Heart right ventricle (tissue), 16 donors: ENCODE measurements at regions of chr10 and their contacts with region 1.

Region 1: GRCh38 chr10:123559066-123559822 is 106.9 kb upstream of the GPR26 start:
- DNase-seq: peak; percentile 54 to 70
- ATAC-seq: peak; percentile 72 to 94 (median 84)
- H3K4me3 ChIP-seq: no peak overlapping the region
- H3K27ac ChIP-seq: no peak overlapping the region
- H3K4me1 ChIP-seq: no peaks in the 10 kb centered on the region
- H3K27me3 ChIP-seq: peaks cover 6 to 58% (median 25%) of the 10 kb centered on the region in 7 donors
- CTCF ChIP-seq: peak; percentile 87 to 99 (median 97)

Region 2: GRCh38 chr10:122298598-122299301 is 1260.5 kb before region 1 on chr10:
- intact Hi-C with region 1: loop called in 1 of 10 experiments (anchors 10 kb)
- DNase-seq: peak; percentile 70 to 72
- ATAC-seq: peak; percentile 77 to 92 (median 89)
- H3K4me3 ChIP-seq: peak overlapping the region in 4 of 10 donors; percentile 2 to 25 (median 14)
- H3K27ac ChIP-seq: no peak overlapping the region
- H3K4me1 ChIP-seq: peaks cover 0 to 14% (median 6%) of the 10 kb centered on the region in 9 donors
- H3K27me3 ChIP-seq: no peaks in the 10 kb centered on the region
- CTCF ChIP-seq: peak; percentile 84 to 96 (median 92)

Region 3: DNA sequence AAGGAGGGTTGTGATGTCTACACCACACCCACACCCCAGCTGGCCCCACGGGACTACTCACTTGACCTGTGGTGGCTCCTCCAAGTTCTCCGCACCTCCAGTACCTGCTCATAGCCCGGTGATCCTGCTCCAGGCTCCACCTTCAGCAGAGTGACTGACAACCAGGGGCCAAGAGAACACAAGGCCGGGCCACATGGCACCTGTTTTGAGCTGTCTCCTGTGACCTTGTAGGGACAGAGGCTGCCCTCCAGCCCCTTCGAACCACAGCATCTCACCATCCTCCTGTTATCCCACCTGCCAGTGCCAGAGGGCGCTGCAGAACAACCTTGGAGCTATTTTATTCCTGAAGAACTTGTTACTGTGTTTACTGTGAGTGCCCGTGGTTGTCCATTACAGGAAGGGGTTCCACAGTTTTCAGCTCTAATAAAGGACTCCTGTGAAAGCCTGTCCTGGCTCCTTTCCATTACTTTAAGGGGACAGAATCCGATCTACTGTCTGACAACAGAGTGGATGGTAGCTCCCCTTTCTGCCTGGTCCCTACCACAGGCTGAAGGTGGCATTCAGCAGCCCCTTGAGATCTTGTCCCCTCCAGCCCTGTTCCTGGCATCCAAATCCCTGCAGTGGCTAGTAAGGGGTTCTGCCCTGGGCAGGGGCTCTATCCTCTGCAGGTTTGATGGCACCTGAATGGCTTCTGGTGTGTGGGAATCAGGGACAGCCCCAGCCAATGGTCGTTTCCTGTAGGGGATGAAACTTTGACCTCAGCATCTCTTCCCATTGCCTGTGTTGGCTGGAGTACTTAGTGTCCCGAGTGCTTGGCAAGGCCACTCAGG is 910.4 kb before region 1 on chr10:
- intact Hi-C with region 1: loop called in 2 of 10 experiments (anchors 10 kb)
- DNase-seq: peak; percentile 41 to 54
- ATAC-seq: peak; percentile 64 to 74 (median 70)
- H3K4me3 ChIP-seq: no peak overlapping the region
- H3K27ac ChIP-seq: no peak overlapping the region
- H3K4me1 ChIP-seq: peaks cover 0 to 4% (median 0%) of the 10 kb centered on the region in 9 donors
- H3K27me3 ChIP-seq: peaks cover 0 to 7% (median 0%) of the 10 kb centered on the region in 7 donors
- CTCF ChIP-seq: peak; percentile 61 to 86 (median 82)

Region 4: DNA sequence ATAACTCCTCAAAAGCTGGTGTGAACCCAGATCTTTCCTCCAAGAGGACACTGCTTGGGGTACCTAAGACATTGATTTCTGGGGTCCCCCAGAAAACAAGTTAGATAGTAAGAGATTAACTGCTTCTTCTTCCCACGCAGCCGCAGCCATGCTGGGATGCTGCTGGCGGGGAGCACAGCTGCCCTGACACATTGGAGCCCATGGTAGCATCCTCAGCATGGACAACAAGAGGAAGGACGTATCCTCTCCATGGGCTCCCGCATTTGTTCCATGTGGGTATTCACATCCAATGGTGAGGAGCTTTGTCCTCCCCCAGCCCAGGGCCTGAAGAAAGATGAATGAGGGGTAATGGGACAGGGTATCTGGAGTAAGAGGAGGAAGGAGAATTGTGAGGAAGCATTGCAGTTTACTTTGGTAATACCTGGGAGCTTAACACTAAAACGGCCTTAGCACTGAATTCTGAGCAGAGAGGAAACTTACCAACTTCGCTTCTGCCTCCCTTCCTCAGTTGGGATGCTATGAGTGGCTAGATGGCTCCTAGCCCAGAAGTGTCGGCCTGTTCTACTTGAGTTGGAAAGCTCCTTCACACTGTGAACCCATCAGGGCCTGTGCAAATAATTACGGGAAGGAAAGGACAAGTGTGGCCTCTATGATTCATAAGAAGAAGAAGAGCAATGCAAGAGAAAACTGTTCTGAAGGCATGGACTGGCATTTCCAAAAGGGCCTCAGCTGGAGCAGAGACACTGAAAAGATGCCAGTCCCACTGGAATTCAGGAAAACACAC is 903.5 kb before region 1 on chr10:
- intact Hi-C with region 1: loop called in 1 of 10 experiments (anchors 10 kb)
- DNase-seq: no peak
- ATAC-seq: peak in 2 of 8 donors; percentile 35 to 57
- H3K4me3 ChIP-seq: no peak overlapping the region
- H3K27ac ChIP-seq: no peak overlapping the region
- H3K4me1 ChIP-seq: no peaks in the 10 kb centered on the region
- H3K27me3 ChIP-seq: peaks cover 0 to 9% (median 0%) of the 10 kb centered on the region in 7 donors
- CTCF ChIP-seq: no peak

Region 5: GRCh38 chr10:123043409-123043925 is 515.8 kb before region 1 on chr10:
- intact Hi-C with region 1: loop called (anchors 1 to 10 kb)
- DNase-seq: peak in 1 of 2 donors; percentile 7
- ATAC-seq: peak in 4 of 8 donors; percentile 34 to 63 (median 50)
- H3K4me3 ChIP-seq: no peak overlapping the region
- H3K27ac ChIP-seq: no peak overlapping the region
- H3K4me1 ChIP-seq: no peaks in the 10 kb centered on the region
- H3K27me3 ChIP-seq: no peaks in the 10 kb centered on the region
- CTCF ChIP-seq: peak; percentile 23 to 70 (median 58)

Region 6: DNA sequence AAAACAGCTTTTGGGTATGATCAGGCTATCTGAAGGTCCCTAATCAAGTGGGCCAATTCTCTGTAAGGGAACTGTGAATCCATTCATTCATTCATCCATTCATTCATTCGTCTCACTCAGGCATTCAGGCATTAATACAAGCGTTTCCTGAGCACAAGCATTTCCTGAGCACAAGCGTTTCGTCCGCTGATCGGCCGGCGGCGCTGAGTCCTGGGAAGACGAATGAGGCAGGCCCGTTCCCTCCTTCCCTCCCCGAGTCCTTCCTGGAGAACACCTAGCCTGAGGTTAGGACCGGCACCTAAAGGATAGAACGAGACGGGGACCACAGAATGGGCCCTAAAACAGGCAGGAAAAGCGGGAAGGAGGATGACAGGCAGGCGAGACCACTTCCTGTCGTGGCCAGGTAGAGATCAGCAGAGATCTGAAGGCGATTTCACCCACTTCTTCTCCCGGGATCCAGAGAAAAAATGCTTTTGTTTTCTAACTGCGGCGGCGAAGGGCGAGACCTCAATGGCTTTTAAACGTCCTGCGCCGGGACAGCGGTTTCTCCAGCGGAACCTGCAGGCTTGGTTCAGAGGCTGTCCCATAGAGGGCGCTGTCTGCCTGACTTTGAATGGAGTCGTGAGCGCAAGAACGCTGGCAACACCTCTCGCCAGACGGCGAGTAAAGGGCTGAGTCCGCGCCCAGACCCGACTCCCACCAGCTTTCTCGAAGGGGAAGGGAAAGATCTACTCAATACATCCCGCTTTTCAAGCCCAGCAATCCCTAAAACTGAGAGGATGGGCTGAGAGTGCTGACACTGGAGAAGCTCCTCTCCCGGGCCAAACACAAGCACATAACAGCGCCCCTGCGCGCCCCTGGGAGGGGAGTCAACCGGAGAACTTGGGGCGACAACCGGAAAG is 426.4 kb before region 1 on chr10:
- intact Hi-C with region 1: loop called (anchors 1 to 5 kb)
- DNase-seq: peak; percentile 81 to 84
- ATAC-seq: peak in 7 of 8 donors; percentile 71 to 92 (median 87)
- H3K4me3 ChIP-seq: peak overlapping the region in 8 of 10 donors; percentile 9 to 39 (median 30)
- H3K27ac ChIP-seq: no peak overlapping the region
- H3K4me1 ChIP-seq: peaks cover 25 to 53% (median 49%) of the 10 kb centered on the region in 9 donors
- H3K27me3 ChIP-seq: peaks cover 65 to 100% (median 99%) of the 10 kb centered on the region in 7 donors
- CTCF ChIP-seq: peak; percentile 86 to 95 (median 93)

Region 7: GRCh38 chr10:123790132-123790885 is 231.1 kb after region 1 on chr10:
- intact Hi-C with region 1: no loop called
- DNase-seq: no peak
- ATAC-seq: no peak
- H3K4me3 ChIP-seq: no peak overlapping the region
- H3K27ac ChIP-seq: no peak overlapping the region
- H3K4me1 ChIP-seq: no peaks in the 10 kb centered on the region
- H3K27me3 ChIP-seq: peaks cover 0 to 8% (median 0%) of the 10 kb centered on the region in 7 donors
- CTCF ChIP-seq: no peak